Natural killer cell (primary cell): ENCODE measurements at regions of chr2 and their contacts with region 1.

Region 1: GRCh38 chr2:8344144-8345097 is 337.4 kb upstream of the ID2 start:
- DNase-seq: no peak
- ATAC-seq: no peak
- H3K4me3 ChIP-seq: no peak overlapping the region
- H3K4me3 Mint-ChIP-seq: no peak overlapping the region
- H3K27ac ChIP-seq: peak overlapping the region; percentile 87
- H3K27ac Mint-ChIP-seq: peak overlapping the region; percentile 94 to 97
- H3K4me1 ChIP-seq: peaks cover 36% of the 10 kb centered on the region
- H3K4me1 Mint-ChIP-seq: peaks cover 48 to 78% of the 10 kb centered on the region in 2 donors
- H3K27me3 ChIP-seq: no peaks in the 10 kb centered on the region
- H3K27me3 Mint-ChIP-seq: no peaks in the 10 kb centered on the region
- CTCF ChIP-seq: no peak

Region 2: DNA sequence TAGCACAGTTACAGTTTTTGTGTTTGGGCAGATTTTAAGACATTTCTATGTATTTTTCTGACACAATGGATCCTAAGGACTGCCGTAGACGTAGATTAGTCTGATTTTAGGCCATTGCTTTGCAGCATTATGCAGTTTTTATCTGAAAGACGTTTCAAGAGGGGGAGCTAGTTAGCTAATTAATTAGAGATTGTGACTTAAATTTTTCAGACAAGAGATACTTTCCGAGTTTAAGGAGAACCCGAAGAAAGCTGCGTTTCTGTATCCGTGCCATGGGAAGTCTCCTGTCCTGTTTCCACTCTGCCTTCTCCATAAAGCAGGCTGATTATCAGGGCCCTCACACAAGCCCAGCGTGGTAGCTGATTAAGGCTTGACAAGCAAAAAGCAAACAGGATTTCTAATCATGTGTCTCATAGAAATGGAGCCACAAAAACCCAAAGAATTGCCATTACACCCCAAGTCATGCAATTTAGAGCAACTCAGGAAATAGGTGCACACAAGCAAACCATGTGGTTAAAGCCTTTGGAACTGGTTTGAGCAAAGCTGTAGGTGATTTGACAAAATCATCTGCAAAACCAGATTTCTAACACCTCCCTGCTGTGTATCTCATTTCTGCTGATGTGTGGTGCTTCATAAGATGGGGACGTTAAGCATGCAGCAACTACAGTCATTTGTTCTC is 619.1 kb before region 1 on chr2:
- intact Hi-C with region 1: loop called (anchors 10 kb)
- DNase-seq: peak; percentile 20 to 82
- ATAC-seq: peak; percentile 89 to 94 (median 90)
- H3K4me3 ChIP-seq: peak overlapping the region; percentile 37
- H3K4me3 Mint-ChIP-seq: peak overlapping the region; percentile 79
- H3K27ac ChIP-seq: peak overlapping the region; percentile 41
- H3K27ac Mint-ChIP-seq: peak overlapping the region; percentile 79 to 81
- H3K4me1 ChIP-seq: peaks cover 50% of the 10 kb centered on the region
- H3K4me1 Mint-ChIP-seq: peaks cover 57 to 63% of the 10 kb centered on the region in 2 donors
- H3K27me3 ChIP-seq: no peaks in the 10 kb centered on the region
- H3K27me3 Mint-ChIP-seq: no peaks in the 10 kb centered on the region
- CTCF ChIP-seq: no peak

Region 3: GRCh38 chr2:8022908-8023640 is 321.3 kb before region 1 on chr2:
- intact Hi-C with region 1: no loop called
- DNase-seq: no peak
- ATAC-seq: peak in 1 of 3 donors; percentile 48
- H3K4me3 ChIP-seq: no peak overlapping the region
- H3K4me3 Mint-ChIP-seq: no peak overlapping the region
- H3K27ac ChIP-seq: no peak overlapping the region
- H3K27ac Mint-ChIP-seq: peak overlapping the region in 1 of 2 donors; percentile 5
- H3K4me1 ChIP-seq: peaks cover 3% of the 10 kb centered on the region
- H3K4me1 Mint-ChIP-seq: peaks cover 24 to 36% of the 10 kb centered on the region in 2 donors
- H3K27me3 ChIP-seq: no peaks in the 10 kb centered on the region
- H3K27me3 Mint-ChIP-seq: no peaks in the 10 kb centered on the region
- CTCF ChIP-seq: no peak

Region 4: GRCh38 chr2:8076448-8077342 is 267.7 kb before region 1 on chr2:
- intact Hi-C with region 1: loop called (anchors 1 kb)
- DNase-seq: peak; percentile 26 to 31
- ATAC-seq: peak; percentile 87 to 97 (median 87)
- H3K4me3 ChIP-seq: no peak overlapping the region
- H3K4me3 Mint-ChIP-seq: peak overlapping the region; percentile 57
- H3K27ac ChIP-seq: peak overlapping the region; percentile 40
- H3K27ac Mint-ChIP-seq: peak overlapping the region; percentile 73 to 80
- H3K4me1 ChIP-seq: peaks cover 20% of the 10 kb centered on the region
- H3K4me1 Mint-ChIP-seq: peaks cover 33% of the 10 kb centered on the region in 2 donors
- H3K27me3 ChIP-seq: no peaks in the 10 kb centered on the region
- H3K27me3 Mint-ChIP-seq: no peaks in the 10 kb centered on the region
- CTCF ChIP-seq: no peak

Region 5: GRCh38 chr2:8281950-8282857 is 62.2 kb before region 1 on chr2:
- intact Hi-C with region 1: loop called (anchors 2 kb)
- DNase-seq: peak; percentile 51 to 53
- ATAC-seq: peak; percentile 79 to 88 (median 82)
- H3K4me3 ChIP-seq: peak overlapping the region; percentile 60
- H3K4me3 Mint-ChIP-seq: peak overlapping the region; percentile 99
- H3K27ac ChIP-seq: peak overlapping the region; percentile 71
- H3K27ac Mint-ChIP-seq: peak overlapping the region; percentile 98 to 99
- H3K4me1 ChIP-seq: peaks cover 53% of the 10 kb centered on the region
- H3K4me1 Mint-ChIP-seq: peaks cover 67 to 84% of the 10 kb centered on the region in 2 donors
- H3K27me3 ChIP-seq: no peaks in the 10 kb centered on the region
- H3K27me3 Mint-ChIP-seq: no peaks in the 10 kb centered on the region
- CTCF ChIP-seq: no peak

Region 6: DNA sequence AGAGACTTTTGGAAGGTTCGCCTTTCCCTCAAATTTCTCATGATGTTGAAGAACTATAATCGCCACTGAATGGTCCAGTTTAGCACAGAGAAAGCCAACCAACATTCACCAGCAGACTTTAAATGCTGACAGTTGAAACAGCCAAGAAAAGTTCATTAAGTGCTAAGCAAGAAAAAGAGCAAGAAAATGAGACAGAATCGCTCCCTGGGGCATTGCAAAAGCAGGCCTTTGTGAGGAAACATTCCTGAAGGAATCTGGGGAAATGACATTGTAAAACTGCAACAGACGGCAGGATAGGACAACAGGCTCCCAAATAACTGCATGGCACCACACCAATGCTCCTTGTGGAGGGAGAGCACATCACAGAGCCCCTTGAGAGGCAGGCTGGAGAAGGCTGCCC is 68.2 kb after region 1 on chr2:
- intact Hi-C with region 1: loop called (anchors 5 kb)
- DNase-seq: no peak
- ATAC-seq: no peak
- H3K4me3 ChIP-seq: no peak overlapping the region
- H3K4me3 Mint-ChIP-seq: no peak overlapping the region
- H3K27ac ChIP-seq: no peak overlapping the region
- H3K27ac Mint-ChIP-seq: peak overlapping the region; percentile 20 to 68
- H3K4me1 ChIP-seq: peaks cover 52% of the 10 kb centered on the region
- H3K4me1 Mint-ChIP-seq: peaks cover 65 to 75% of the 10 kb centered on the region in 2 donors
- H3K27me3 ChIP-seq: no peaks in the 10 kb centered on the region
- H3K27me3 Mint-ChIP-seq: no peaks in the 10 kb centered on the region
- CTCF ChIP-seq: no peak

Region 7: DNA sequence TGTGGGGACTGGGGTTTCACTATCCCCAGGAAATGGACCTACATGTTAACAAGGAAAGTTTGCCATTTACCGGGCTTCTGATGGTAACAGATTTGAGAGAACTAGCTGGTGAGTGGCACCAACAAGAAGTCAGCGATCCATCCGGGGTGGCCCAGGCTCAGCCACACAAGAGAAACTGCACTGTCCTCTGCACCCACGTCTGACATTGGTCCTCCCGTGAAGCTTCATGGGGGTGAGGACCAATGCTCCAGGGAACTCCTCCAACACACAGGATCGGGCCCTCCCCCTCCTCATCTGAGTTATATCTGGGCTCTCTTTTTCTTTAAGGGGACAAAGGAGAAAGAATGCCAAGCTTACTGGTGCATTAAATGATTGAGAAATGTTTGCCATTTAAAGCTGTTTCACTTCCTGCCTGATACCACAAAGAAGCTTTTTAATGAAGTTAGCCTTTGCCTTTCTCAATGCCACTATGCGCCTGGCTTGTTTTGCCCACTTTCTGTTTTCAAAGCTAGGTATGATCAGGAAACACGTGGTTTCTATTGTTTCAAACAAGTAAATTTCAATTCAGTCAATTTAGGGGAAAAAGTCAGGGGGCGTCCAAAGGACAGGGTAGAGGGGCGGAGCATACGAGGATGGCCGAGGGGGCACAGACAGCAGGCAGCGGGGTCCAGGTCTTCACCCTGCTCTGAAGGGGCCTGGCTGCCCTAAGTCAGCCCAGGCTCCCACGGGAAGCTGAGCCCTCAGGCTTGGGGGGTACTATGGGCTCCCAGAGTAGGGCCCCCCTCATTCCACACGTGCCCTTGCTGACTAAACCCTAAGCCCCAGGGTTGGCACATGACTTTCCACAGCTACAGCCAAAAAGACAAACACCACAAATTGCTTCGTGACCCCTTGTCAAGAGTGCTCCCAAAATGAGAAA is 133.4 kb after region 1 on chr2:
- intact Hi-C with region 1: loop called (anchors 5 kb)
- DNase-seq: peak; percentile 44 to 68
- ATAC-seq: peak; percentile 46 to 69 (median 66)
- H3K4me3 ChIP-seq: peak overlapping the region; percentile 17
- H3K4me3 Mint-ChIP-seq: peak overlapping the region; percentile 86
- H3K27ac ChIP-seq: peak overlapping the region; percentile 93
- H3K27ac Mint-ChIP-seq: peak overlapping the region; percentile 86 to 100
- H3K4me1 ChIP-seq: peaks cover 94% of the 10 kb centered on the region
- H3K4me1 Mint-ChIP-seq: peaks cover 97 to 100% of the 10 kb centered on the region in 2 donors
- H3K27me3 ChIP-seq: no peaks in the 10 kb centered on the region
- H3K27me3 Mint-ChIP-seq: no peaks in the 10 kb centered on the region
- CTCF ChIP-seq: no peak

Region 8: GRCh38 chr2:8514796-8515758 is 170.7 kb after region 1 on chr2:
- intact Hi-C with region 1: loop called (anchors 5 kb)
- DNase-seq: peak; percentile 46 to 85
- ATAC-seq: peak; percentile 43 to 76 (median 63)
- H3K4me3 ChIP-seq: no peak overlapping the region
- H3K4me3 Mint-ChIP-seq: peak overlapping the region; percentile 68
- H3K27ac ChIP-seq: peak overlapping the region; percentile 92
- H3K27ac Mint-ChIP-seq: peak overlapping the region; percentile 88 to 94
- H3K4me1 ChIP-seq: peaks cover 99% of the 10 kb centered on the region
- H3K4me1 Mint-ChIP-seq: peaks cover 71 to 84% of the 10 kb centered on the region in 2 donors
- H3K27me3 ChIP-seq: no peaks in the 10 kb centered on the region
- H3K27me3 Mint-ChIP-seq: no peaks in the 10 kb centered on the region
- CTCF ChIP-seq: no peak